Heart left ventricle (tissue), 16 donors: ENCODE measurements at regions of chr15 and their contacts with region 1.

Region 1: DNA sequence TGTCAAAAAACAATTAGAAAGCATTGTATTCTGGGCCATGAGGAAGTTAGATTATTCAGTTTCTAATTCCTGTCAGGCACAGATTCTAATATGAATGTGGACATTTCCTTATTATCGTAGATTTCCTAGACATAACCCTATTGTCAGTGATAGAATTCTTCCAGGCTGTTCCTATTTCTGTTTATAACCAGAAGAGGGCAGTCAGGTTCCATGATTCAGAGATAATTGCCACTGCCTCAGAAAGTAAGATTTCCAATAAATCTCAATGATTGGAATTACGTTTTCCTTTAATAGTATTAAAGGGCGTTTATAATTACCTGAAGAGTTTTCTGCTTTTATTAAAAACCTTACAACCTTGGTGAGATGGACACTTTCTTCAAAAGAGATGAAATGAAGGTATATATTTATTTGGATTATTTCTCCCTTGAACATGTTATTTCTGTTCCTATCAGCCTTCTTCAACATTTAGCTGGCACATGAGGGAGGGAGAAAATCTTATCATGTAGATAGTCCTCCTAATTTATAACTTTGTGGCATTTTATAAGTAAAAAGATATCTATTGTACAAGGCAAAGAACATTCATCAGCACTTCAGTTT is 439.2 kb downstream of the MCTP2 start:
- DNase-seq: no peak
- ATAC-seq: peak in 2 of 4 donors; percentile 52 to 54
- H3K4me3 ChIP-seq: no peak overlapping the region
- H3K27ac ChIP-seq: peak overlapping the region in 2 of 12 donors; percentile 6 to 21
- H3K4me1 ChIP-seq: peaks cover 0 to 15% (median 5%) of the 10 kb centered on the region in 12 donors
- H3K27me3 ChIP-seq: peaks cover 0 to 7% (median 0%) of the 10 kb centered on the region in 9 donors
- CTCF ChIP-seq: peak; percentile 63 to 86 (median 72)
- POLR2A ChIP-seq: no peak

Region 2: GRCh38 chr15:94555842-94556516 is 114.6 kb before region 1 on chr15:
- intact Hi-C with region 1: no loop called
- DNase-seq: no peak
- ATAC-seq: no peak
- H3K4me3 ChIP-seq: no peak overlapping the region
- H3K27ac ChIP-seq: no peak overlapping the region
- H3K4me1 ChIP-seq: no peaks in the 10 kb centered on the region
- H3K27me3 ChIP-seq: no peaks in the 10 kb centered on the region
- CTCF ChIP-seq: no peak
- POLR2A ChIP-seq: no peak

Region 3: DNA sequence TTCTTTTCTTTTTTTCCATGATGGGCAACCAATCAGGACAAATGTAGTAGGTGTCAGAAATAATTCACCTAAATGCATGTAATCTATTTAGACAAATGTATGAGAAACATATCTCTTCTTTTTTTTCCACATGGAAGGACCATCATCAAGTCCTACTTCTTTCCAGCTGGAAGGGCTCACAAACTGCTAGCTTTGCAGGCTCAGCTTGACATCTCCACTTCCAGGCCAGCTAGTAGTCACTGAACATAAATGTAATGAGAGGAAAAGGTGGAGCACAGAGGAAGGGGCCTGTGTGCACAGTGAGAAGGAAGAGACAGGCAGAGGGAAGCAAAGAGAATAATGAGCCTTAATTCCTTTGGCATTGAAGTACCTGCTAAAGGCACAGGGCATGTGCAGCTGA is 65.7 kb after region 1 on chr15:
- intact Hi-C with region 1: no loop called
- DNase-seq: no peak
- ATAC-seq: no peak
- H3K4me3 ChIP-seq: no peak overlapping the region
- H3K27ac ChIP-seq: no peak overlapping the region
- H3K4me1 ChIP-seq: no peaks in the 10 kb centered on the region
- H3K27me3 ChIP-seq: no peaks in the 10 kb centered on the region
- CTCF ChIP-seq: no peak
- POLR2A ChIP-seq: no peak

Region 4: GRCh38 chr15:94965593-94965992 is 295.1 kb after region 1 on chr15:
- intact Hi-C with region 1: loop called in 1 of 10 experiments (anchors 10 kb)
- DNase-seq: no peak
- ATAC-seq: peak in 2 of 4 donors; percentile 36 to 64
- H3K4me3 ChIP-seq: no peak overlapping the region
- H3K27ac ChIP-seq: peak overlapping the region in 5 of 12 donors; percentile 21 to 54 (median 43)
- H3K4me1 ChIP-seq: peaks cover 0 to 5% (median 0%) of the 10 kb centered on the region in 12 donors
- H3K27me3 ChIP-seq: no peaks in the 10 kb centered on the region
- CTCF ChIP-seq: no peak
- POLR2A ChIP-seq: no peak

Region 5: GRCh38 chr15:95018888-95019545 is 348.5 kb after region 1 on chr15:
- intact Hi-C with region 1: loop called in 3 of 10 experiments (anchors 5 to 10 kb)
- DNase-seq: no peak
- ATAC-seq: peak in 3 of 4 donors; percentile 63 to 78 (median 73)
- H3K4me3 ChIP-seq: no peak overlapping the region
- H3K27ac ChIP-seq: peak overlapping the region in 4 of 12 donors; percentile 3 to 24 (median 18)
- H3K4me1 ChIP-seq: peaks cover 0 to 34% (median 22%) of the 10 kb centered on the region in 12 donors
- H3K27me3 ChIP-seq: no peaks in the 10 kb centered on the region
- CTCF ChIP-seq: no peak
- POLR2A ChIP-seq: no peak

Region 6: DNA sequence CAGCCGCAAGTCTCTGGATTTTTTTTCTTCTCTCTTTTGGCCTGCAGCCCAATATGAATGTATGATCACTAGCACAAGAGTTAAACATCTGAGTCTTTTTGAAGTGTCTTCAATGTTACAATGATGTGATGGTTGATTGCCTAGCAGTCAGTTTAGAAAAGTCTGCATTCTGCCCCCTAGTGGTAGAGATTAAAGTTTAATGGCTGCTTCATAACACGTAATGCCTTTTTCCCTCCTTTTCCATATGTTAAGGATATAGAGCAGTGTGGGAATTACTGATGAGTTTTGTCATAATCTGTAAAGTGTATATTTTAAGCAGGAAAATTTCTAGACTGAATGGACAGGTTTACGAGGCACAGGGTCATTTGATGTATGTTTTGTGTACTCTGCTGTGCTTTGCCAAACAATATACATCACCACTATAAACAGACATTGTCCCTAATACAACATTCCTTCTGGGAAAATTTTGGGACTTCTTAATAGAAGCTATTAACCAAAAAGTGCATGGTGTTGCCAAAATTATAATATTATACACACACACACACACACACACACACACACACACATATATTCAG is 621.4 kb after region 1 on chr15:
- intact Hi-C with region 1: loop called in 1 of 10 experiments (anchors 10 kb)
- DNase-seq: no peak
- ATAC-seq: no peak
- H3K4me3 ChIP-seq: no peak overlapping the region
- H3K27ac ChIP-seq: no peak overlapping the region
- H3K4me1 ChIP-seq: peaks cover 0 to 33% (median 5%) of the 10 kb centered on the region in 12 donors
- H3K27me3 ChIP-seq: no peaks in the 10 kb centered on the region
- CTCF ChIP-seq: peak; percentile 47 to 78 (median 66)
- POLR2A ChIP-seq: no peak

Region 7: DNA sequence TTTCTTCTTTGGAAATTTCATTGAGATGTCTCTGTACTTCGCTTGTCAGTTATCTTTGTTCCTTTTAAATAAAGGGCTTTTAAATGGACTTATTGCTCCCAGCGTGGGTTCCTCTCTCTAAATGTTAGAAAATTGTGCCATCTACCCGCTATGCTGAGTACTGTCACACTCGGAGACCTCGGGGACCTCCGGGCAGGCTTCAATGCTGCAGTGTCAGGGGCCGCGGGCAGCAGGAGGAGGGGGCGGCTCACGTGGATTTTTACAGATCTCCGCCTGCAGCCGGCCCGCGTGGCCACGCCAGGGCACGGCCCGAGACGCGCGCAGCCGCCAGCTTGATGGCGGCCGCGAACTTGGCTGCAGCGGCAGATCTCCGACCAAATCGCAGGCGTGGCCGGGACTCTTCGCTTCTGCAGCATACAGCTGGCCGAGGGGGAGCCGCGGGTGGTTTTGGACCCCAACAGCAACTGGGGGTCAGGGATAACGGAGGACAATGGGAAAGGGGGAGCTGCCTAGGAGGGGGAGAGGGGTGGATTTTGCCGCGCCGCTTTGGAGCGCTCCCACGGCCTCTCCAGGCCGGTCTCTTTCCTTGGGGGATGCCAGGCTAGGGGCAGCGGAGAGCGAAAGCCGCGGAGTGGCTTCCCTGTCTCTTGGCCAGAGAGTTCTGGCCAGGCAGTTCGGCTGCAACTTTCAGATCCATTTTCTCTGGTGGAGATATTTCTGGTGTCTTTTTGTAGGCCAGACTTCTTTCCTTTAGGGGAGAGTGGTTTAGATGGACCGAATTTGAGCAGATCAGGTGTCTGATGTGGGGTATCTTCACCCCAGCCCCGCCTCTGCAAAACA is 1675.2 kb after region 1 on chr15:
- intact Hi-C with region 1: loop called in 6 of 10 experiments (anchors 5 to 10 kb)
- DNase-seq: peak in 4 of 5 donors; percentile 74 to 85 (median 82)
- ATAC-seq: peak; percentile 62 to 85 (median 76)
- H3K4me3 ChIP-seq: peak overlapping the region; percentile 22 to 91 (median 67)
- H3K27ac ChIP-seq: peak overlapping the region; percentile 2 to 96 (median 92)
- H3K4me1 ChIP-seq: peaks cover 0 to 76% (median 22%) of the 10 kb centered on the region in 12 donors
- H3K27me3 ChIP-seq: peaks cover 0 to 95% (median 20%) of the 10 kb centered on the region in 9 donors
- CTCF ChIP-seq: peak; percentile 44 to 77 (median 68)
- POLR2A ChIP-seq: peak in 1 of 2 donors; percentile 45